ENCODE measurements at regions of chr17 and their contacts with region 1.

Region 1: GRCh38 chr17:29640413-29640812 is 17.7 kb upstream of the CORO6 start:
- DNase-seq: no peak
- ATAC-seq: no peak
- H3K4me3 Mint-ChIP-seq: no peak overlapping the region
- H3K27ac Mint-ChIP-seq: peak overlapping the region; percentile 84
- H3K4me1 Mint-ChIP-seq: peaks cover 27% of the 10 kb centered on the region
- H3K27me3 Mint-ChIP-seq: no peaks in the 10 kb centered on the region

Region 2: DNA sequence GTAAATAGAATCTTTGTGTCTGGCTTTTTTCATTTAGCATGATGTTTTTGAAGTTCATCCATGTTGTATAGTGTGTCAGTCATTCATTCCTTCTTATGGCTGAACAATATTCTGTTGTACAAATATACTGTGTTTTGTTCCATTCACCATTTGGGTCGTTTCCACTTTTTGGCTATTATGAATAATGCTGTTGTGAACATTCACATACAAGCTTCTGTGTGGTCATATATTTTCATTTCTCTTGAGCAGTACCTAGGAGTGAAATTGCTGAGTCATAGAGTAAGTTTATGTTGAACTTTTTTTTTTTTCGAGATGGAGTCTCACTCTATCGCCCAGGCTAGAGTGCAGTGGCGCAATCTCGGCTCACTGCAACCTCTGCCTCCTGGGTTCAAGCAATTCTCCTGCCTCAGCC is 282.6 kb before region 1 on chr17:
- CTCF ChIA-PET with region 1: no interaction called
- POLR2A ChIA-PET with region 1: no interaction called
- intact Hi-C with region 1: no loop called
- DNase-seq: no peak
- ATAC-seq: peak; percentile 84
- H3K4me3 Mint-ChIP-seq: no peak overlapping the region
- H3K27ac Mint-ChIP-seq: no peak overlapping the region
- H3K4me1 Mint-ChIP-seq: no peaks in the 10 kb centered on the region
- H3K27me3 Mint-ChIP-seq: no peaks in the 10 kb centered on the region

Region 3: DNA sequence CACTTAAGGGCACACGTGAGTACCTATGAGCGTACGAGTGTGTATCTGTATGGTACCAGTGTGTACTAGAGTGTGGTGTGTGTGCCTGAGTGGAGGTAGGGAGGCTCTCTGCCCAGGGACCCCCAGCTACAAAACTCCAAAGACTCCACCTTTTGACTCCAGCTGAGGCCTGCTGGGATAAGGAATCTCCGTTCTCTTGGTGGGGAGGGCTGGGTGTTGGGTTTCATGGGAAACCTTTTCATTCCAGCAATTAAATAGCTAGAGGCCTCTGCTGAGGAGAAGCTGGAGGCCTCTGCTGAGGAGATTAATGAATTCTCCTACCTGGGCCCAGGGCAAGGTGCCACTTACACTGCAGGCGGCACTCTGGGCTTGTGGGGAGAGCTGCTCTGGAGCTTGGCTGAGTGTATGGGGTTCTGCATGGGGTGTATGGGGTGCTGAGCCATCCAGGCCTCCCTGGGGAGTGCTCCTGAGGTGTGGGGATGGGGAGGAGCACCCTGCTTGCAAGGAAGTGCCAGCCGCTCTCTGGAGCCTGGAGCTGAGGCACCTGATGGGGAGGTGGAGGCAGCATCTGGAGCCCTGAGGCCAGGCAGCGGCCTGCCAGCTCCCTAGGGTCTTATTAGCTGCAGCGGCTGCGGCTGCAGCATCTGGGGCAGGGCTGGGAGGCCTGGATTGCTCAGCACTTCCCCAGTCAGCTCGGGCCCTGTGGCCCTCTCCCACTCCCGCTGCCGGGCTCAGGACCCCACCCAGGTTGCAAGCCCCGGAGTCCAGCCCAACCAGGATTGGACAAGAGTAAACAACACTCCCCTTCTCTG is 42.8 kb before region 1 on chr17:
- CTCF ChIA-PET with region 1: no interaction called
- POLR2A ChIA-PET with region 1: no interaction called
- intact Hi-C with region 1: no loop called
- DNase-seq: no peak
- ATAC-seq: no peak
- H3K4me3 Mint-ChIP-seq: no peak overlapping the region
- H3K27ac Mint-ChIP-seq: no peak overlapping the region
- H3K4me1 Mint-ChIP-seq: peaks cover 8% of the 10 kb centered on the region
- H3K27me3 Mint-ChIP-seq: no peaks in the 10 kb centered on the region

Region 4: DNA sequence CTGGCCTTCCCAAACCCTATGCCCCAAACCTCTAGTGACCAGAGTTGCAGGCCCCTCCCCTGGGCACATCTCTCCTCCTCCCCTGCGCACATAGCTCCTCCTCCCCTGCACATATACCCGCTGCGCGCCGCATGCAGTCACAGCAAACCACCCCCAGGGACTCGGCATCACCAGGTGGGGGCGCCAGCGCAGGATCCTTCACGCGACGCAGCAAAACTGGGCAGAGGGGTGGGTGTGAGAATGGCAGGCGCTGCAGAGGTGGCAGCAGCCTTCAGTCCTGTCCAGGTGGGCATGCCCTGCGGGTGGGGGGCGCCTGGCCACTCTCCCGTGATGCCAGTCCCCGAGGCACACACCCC is 23.3 kb before region 1 on chr17:
- CTCF ChIA-PET with region 1: interaction called, 31 read pairs
- POLR2A ChIA-PET with region 1: interaction called, 3 read pairs
- intact Hi-C with region 1: no loop called
- DNase-seq: peak; percentile 98
- ATAC-seq: peak; percentile 82
- H3K4me3 Mint-ChIP-seq: peak overlapping the region; percentile 75
- H3K27ac Mint-ChIP-seq: peak overlapping the region; percentile 89
- H3K4me1 Mint-ChIP-seq: peaks cover 47% of the 10 kb centered on the region
- H3K27me3 Mint-ChIP-seq: peaks cover 2% of the 10 kb centered on the region

Region 5: DNA sequence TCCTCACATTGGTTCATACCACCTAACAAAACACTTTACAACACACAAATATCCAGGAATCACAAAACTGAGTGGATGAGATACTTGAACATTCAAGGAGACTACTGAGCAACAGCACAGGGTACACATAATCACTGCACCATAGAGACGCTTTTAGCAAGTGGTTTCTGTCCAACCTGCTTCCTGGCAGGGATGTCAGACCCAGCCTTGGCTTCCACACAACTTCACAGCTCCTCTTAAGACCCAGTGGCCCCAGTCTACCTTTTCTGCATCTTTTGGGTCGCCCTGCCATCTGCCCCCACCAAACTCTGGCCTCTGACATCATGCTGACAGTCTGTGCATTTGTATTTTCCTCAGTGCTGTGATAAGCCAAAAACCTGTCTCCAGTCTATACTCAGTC is 11.8 kb before region 1 on chr17:
- CTCF ChIA-PET with region 1: interaction called, 31 read pairs
- POLR2A ChIA-PET with region 1: interaction called, 4 read pairs
- intact Hi-C with region 1: no loop called
- DNase-seq: no peak
- ATAC-seq: no peak
- H3K4me3 Mint-ChIP-seq: no peak overlapping the region
- H3K27ac Mint-ChIP-seq: peak overlapping the region; percentile 44
- H3K4me1 Mint-ChIP-seq: peaks cover 55% of the 10 kb centered on the region
- H3K27me3 Mint-ChIP-seq: no peaks in the 10 kb centered on the region

Region 6: DNA sequence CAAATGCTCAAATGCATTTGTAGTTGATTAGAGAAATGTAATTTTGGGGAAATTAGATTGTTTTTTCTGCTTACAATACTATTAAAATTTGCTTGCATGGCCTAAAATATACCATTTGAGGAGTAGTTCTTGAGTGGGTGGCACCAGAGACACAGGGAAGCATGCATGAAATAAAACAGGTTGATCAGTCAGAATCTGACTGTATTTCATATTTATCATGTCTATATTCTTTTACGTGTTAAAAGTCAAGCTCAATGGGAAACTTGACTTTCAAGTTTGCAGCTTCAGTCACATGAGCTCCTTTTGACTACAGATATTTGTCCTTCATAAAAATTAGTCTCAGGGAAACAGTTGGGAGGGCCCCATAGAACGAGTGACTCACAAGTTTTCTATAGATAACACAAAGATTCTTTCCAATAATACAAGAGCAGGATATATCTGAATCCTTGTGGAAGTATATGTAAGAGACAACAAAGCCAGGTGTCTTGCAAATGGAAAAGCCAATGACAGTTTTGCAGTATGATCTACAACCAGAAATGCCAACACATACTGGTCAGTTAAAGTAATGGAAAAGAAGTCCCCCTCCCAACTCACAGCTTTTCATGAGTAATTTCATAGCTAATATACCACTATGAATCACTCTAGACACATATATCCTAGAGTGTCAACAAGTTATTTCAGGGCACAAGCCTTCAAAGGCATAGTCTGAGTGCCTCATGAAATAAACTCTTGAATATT is 24.5 kb after region 1 on chr17:
- CTCF ChIA-PET with region 1: interaction called, 10 read pairs
- POLR2A ChIA-PET with region 1: interaction called, 6 read pairs
- intact Hi-C with region 1: no loop called
- DNase-seq: peak; percentile 18
- ATAC-seq: peak; percentile 94
- H3K4me3 Mint-ChIP-seq: no peak overlapping the region
- H3K27ac Mint-ChIP-seq: peak overlapping the region; percentile 85
- H3K4me1 Mint-ChIP-seq: peaks cover 32% of the 10 kb centered on the region
- H3K27me3 Mint-ChIP-seq: no peaks in the 10 kb centered on the region

Region 7: GRCh38 chr17:29753845-29754439 is 113.5 kb after region 1 on chr17:
- CTCF ChIA-PET with region 1: interaction called, 14 read pairs
- POLR2A ChIA-PET with region 1: no interaction called
- intact Hi-C with region 1: no loop called
- DNase-seq: no peak
- ATAC-seq: peak; percentile 34
- H3K4me3 Mint-ChIP-seq: no peak overlapping the region
- H3K27ac Mint-ChIP-seq: peak overlapping the region; percentile 45
- H3K4me1 Mint-ChIP-seq: peaks cover 40% of the 10 kb centered on the region
- H3K27me3 Mint-ChIP-seq: no peaks in the 10 kb centered on the region

Region 8: GRCh38 chr17:29777663-29778062 is 137.2 kb after region 1 on chr17:
- CTCF ChIA-PET with region 1: interaction called, 162 read pairs
- POLR2A ChIA-PET with region 1: interaction called, 5 read pairs
- intact Hi-C with region 1: loop called (anchors 1 kb)
- DNase-seq: no peak
- ATAC-seq: no peak
- H3K4me3 Mint-ChIP-seq: no peak overlapping the region
- H3K27ac Mint-ChIP-seq: no peak overlapping the region
- H3K4me1 Mint-ChIP-seq: peaks cover 8% of the 10 kb centered on the region
- H3K27me3 Mint-ChIP-seq: no peaks in the 10 kb centered on the region

Region 9: DNA sequence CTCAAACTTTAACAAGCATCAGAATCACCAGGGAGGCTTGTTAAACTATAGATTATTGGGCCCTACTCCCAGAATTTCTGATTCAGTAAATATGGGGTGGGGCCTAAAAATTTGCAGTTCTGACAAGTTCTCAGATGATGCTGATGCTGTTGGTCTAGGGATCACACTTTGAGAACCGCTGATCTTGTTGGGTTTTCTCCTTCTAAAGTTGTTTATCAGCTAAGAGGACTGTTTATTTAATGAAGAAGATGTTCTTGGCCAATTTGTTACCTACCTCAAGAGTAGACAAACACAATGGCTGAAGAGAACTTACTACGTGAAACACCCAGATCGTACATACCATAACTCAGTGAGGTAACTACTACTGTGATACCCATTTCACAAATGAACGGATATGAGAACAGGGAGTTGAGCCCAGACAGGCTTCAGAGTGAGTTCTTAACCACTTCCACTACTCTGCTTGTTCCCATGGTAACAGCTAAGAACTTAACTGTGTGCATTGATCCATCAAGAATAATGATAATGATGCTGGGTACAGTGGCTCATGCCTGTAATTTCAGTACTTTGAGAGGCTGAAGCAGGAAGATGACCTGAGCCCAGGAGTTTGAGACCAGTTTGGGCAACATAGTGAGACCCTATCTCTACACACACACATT is 390.9 kb after region 1 on chr17:
- CTCF ChIA-PET with region 1: no interaction called
- POLR2A ChIA-PET with region 1: interaction called, 12 read pairs
- intact Hi-C with region 1: no loop called
- DNase-seq: no peak
- ATAC-seq: peak; percentile 64
- H3K4me3 Mint-ChIP-seq: no peak overlapping the region
- H3K27ac Mint-ChIP-seq: no peak overlapping the region
- H3K4me1 Mint-ChIP-seq: no peaks in the 10 kb centered on the region
- H3K27me3 Mint-ChIP-seq: no peaks in the 10 kb centered on the region

Measured in activated CD4-positive, alpha-beta T cell treated with anti-CD3 and anti-CD28 coated beads for 36 hours (primary cell).